MCF 10A (cell line): ENCODE measurements at regions of chr5 and their contacts with region 1.

Region 1: DNA sequence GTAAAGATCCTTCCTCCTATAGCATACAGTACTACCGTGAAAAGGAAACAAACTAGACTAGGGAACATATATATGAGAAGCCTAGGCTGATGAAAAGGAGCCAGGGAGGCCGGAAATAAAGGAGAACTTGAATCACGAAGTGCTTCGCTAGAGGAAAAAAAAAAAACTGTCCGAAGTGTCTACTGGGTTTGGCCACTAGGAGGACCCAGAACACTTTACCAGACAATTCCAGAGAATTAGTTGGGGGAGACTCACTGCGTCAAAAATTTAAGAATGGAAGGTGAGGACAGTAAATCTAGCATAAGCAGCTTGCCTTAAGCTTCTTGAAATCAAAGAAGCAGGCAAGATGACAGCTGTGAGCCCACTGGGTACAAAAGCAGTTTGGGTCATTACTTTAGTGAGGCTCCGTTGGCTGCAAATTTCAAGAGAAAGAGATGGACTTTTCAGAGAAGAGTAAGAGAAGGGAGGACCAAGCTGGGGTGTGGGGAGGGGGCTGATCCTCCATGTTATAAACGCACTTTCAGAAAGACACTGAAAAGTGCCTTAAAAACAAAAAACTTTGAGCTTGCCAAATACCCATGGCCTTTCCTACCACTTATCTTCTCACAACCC is 47.4 kb downstream of the P4HA2 start:
- DNase-seq: peak; percentile 82
- H3K4me3 Mint-ChIP-seq: no peak overlapping the region
- H3K27ac Mint-ChIP-seq: no peak overlapping the region
- H3K4me1 Mint-ChIP-seq: peaks cover 16% of the 10 kb centered on the region
- H3K27me3 Mint-ChIP-seq: no peaks in the 10 kb centered on the region
- CTCF ChIP-seq: peak; percentile 89

Region 2: GRCh38 chr5:131957721-131958441 is 222.4 kb before region 1 on chr5:
- CTCF ChIA-PET with region 1: no interaction called
- POLR2A ChIA-PET with region 1: no interaction called
- intact Hi-C with region 1: no loop called
- DNase-seq: no peak
- H3K4me3 Mint-ChIP-seq: no peak overlapping the region
- H3K27ac Mint-ChIP-seq: no peak overlapping the region
- H3K4me1 Mint-ChIP-seq: no peaks in the 10 kb centered on the region
- H3K27me3 Mint-ChIP-seq: peaks cover 27% of the 10 kb centered on the region
- CTCF ChIP-seq: no peak

Region 3: DNA sequence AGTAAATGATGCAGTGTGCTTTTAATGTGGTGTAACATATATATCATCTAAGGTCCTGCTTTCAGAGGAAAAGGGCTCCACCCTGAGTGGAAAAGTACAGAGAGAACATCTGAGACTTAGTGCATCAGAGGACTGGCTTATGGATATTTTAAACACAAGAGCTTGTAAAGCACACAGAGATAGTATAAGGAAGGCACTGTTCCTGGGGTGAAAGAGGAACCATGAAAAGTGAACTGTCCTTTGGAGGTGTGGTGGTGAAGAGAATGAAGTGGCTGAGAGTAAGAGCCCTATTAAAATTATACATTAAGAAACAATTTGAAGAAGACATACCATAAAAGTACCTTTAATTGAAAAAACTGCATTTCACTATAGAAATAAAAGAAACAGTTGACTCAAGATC is 37.8 kb before region 1 on chr5:
- CTCF ChIA-PET with region 1: interaction called, 10 read pairs
- POLR2A ChIA-PET with region 1: interaction called, 3 read pairs
- intact Hi-C with region 1: no loop called
- DNase-seq: no peak
- H3K4me3 Mint-ChIP-seq: no peak overlapping the region
- H3K27ac Mint-ChIP-seq: no peak overlapping the region
- H3K4me1 Mint-ChIP-seq: peaks cover 10% of the 10 kb centered on the region
- H3K27me3 Mint-ChIP-seq: no peaks in the 10 kb centered on the region
- CTCF ChIP-seq: no peak

Region 4: GRCh38 chr5:132215329-132215728 is 35.1 kb after region 1 on chr5:
- CTCF ChIA-PET with region 1: interaction called, 11 read pairs
- POLR2A ChIA-PET with region 1: no interaction called
- intact Hi-C with region 1: no loop called
- DNase-seq: peak; percentile 99
- H3K4me3 Mint-ChIP-seq: peak overlapping the region; percentile 32
- H3K27ac Mint-ChIP-seq: peak overlapping the region; percentile 80
- H3K4me1 Mint-ChIP-seq: peaks cover 15% of the 10 kb centered on the region
- H3K27me3 Mint-ChIP-seq: no peaks in the 10 kb centered on the region
- CTCF ChIP-seq: no peak

Region 5: DNA sequence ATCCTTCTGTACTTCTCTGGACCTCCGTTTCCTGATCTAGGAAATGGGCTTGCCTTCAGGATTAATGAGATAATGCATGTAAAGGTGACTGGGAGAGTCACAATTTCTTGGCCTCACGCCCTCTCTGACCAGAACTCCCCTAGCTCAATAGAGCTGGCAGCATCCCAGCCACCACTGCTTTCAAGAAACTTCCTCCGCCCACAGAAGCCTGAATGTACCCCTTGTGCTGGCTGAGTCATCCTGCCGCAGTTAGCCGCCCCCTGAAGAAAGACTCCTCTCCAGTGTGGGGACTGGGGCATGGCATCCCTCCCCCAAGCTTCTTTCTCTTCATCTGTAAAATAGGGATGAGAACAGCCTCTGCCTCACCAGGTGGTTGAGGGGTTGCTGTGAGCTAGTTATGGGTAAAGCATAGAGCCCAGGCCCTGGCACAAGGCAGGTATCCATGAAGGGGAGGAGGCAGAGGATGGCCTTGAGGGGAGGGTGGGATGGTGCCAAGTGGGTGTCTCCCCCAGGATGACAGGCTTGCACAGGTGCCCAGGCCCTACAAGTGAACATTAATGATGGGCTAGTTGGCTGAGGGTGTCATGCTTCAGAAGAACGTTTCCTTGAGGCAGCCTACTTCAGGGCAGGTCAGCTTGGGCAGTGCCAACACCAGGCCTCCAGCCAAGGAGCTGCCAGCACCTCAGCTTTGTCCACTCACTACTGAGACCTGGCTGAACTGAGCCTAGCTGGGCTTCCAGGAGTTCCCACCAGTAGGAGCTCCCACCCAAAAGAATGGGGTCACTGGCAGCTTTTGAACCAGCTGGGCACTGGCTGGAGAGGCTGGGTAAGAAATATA is 80.7 kb after region 1 on chr5:
- CTCF ChIA-PET with region 1: interaction called, 9 read pairs
- POLR2A ChIA-PET with region 1: interaction called, 4 read pairs
- intact Hi-C with region 1: loop called (anchors 2 kb)
- DNase-seq: peak; percentile 97
- H3K4me3 Mint-ChIP-seq: peak overlapping the region; percentile 83
- H3K27ac Mint-ChIP-seq: peak overlapping the region; percentile 74
- H3K4me1 Mint-ChIP-seq: peaks cover 68% of the 10 kb centered on the region
- H3K27me3 Mint-ChIP-seq: no peaks in the 10 kb centered on the region
- CTCF ChIP-seq: no peak

Region 6: GRCh38 chr5:132369474-132370180 is 189.4 kb after region 1 on chr5 and contains the start of gene SLC22A5:
- CTCF ChIA-PET with region 1: interaction called, 10 read pairs
- POLR2A ChIA-PET with region 1: interaction called, 8 read pairs
- intact Hi-C with region 1: loop called (anchors 1 kb)
- DNase-seq: peak; percentile 84
- H3K4me3 Mint-ChIP-seq: peak within 1 kb of the TSS; percentile 79
- H3K27ac Mint-ChIP-seq: peak within 1 kb of the TSS; percentile 39
- H3K4me1 Mint-ChIP-seq: peaks cover 44% of the 10 kb centered on the region
- H3K27me3 Mint-ChIP-seq: no peaks in the 10 kb centered on the region
- CTCF ChIP-seq: no peak
- total RNA-seq, gene SLC22A5: 122 and 167 TPM in 2 replicates

Region 7: GRCh38 chr5:132490486-132491367 is 310.5 kb after region 1 on chr5 and contains the start of gene IRF1:
- CTCF ChIA-PET with region 1: interaction called, 3 read pairs
- POLR2A ChIA-PET with region 1: no interaction called
- intact Hi-C with region 1: loop called (anchors 1 kb)
- DNase-seq: peak; percentile 99
- H3K4me3 Mint-ChIP-seq: peak within 1 kb of the TSS; percentile 87
- H3K27ac Mint-ChIP-seq: peak within 1 kb of the TSS; percentile 84
- H3K4me1 Mint-ChIP-seq: peaks cover 50% of the 10 kb centered on the region
- H3K27me3 Mint-ChIP-seq: no peaks in the 10 kb centered on the region
- CTCF ChIP-seq: peak; percentile 11
- total RNA-seq, gene IRF1: 18.7 and 23.0 TPM in 2 replicates